GM12878 (cell line): ENCODE measurements at regions of chr19 and their contacts with region 1.

Region 1: DNA sequence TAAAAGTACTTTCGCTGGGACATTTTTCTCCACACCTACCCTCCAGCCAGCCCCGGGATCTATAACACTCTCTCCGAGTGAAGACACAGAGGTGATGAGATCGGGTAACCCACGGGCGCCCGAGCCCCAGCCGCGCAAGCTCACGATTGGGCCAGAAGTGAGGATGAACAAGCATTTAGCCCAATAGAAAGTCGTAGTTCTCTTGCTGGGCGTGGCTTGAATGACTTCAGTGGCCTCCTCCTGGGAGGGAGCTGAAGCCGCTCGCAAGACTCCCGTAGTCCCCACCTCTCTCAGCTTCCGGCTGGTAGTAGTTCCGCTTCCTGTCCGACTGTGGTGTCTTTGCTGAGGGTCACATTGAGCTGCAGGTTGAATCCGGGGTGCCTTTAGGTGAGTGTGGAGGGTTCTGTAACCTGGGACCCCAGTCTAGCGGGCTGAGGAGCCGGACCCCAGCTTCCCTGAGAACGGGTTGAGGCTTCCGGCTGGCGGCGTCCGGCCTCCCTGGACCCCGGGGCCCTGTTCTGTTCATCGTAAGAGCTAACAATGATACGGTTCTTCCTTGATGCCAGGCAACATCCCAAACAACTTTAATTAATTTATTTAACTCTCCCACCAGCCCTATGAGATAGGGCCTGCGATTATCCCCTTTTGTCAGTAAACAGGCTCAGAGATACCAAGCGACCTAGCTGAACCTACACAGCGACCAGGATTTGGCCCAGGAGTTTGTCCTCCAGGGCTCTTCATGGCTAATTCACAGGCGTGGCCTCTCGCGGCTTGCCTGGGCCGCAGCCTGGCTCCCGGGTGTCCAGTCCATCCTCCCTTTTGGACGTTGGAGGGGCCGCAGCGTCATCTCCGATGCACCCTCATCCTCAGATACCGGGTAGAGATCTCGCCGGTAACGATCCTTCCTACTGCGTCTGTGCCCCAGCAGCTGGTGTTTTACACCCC is at the start of gene COX6B1:
- DNase-seq: peak; percentile 96
- ATAC-seq: peak; percentile 77
- H3K4me3 ChIP-seq: peak within 1 kb of the TSS; percentile 99
- H3K27ac ChIP-seq: peak within 1 kb of the TSS; percentile 85
- H3K4me1 ChIP-seq: peaks cover 11% of the 10 kb centered on the region
- H3K27me3 ChIP-seq: no peaks in the 10 kb centered on the region
- CTCF ChIP-seq: no peak
- EP300 ChIP-seq: no peak
- POLR2A ChIP-seq: peak; percentile 91
- RAD21 ChIP-seq: no peak
- polyA plus RNA-seq, gene COX6B1: 1,597 to 1,700 TPM

Region 2: DNA sequence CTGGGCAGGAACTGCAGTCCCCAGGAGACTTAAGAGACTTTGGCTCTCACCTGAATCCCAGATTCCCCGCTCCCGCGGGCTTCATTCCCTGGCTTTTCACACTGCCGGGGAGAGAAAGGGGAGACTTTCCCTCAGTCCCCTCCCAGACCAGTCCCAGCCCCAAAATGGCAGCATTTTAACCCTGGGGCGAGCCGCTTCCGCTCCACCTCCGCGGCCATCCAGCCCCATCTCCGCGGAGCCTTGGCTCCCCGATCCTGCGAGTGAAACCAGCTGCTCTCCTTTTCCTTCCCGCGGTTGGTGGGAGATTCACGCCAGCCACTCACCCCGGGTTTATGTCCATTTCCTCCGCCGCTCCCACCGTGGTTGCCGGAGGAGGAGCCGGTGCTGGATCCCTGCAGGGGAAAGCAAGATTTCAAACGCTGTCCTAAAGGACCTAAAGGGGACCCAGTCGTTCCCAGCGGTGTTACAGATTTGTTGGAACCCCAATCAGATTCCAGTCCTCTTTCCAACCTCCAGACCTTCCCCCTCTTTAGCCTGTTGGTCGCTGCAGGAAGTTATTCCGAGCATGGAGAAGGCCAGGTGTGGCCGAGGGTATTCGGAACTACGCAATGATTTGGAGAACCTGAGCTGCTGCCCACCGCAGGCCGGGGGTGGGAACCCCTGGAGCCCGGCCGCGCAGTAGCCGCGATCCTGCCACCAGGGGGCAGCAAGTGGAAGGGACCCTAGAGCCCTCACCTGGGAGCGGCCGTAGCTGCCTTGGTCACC is 138.2 kb before region 1 on chr19:
- CTCF ChIA-PET with region 1: interaction called, 9 read pairs
- POLR2A ChIA-PET with region 1: interaction called, 14 read pairs
- RAD21 ChIA-PET with region 1: interaction called, 3 read pairs
- SMC1A ChIA-PET with region 1: no interaction called
- in situ Hi-C with region 1: no loop called
- intact Hi-C with region 1: no loop called
- DNase-seq: no peak
- ATAC-seq: peak; percentile 88
- H3K4me3 ChIP-seq: peak overlapping the region; percentile 74
- H3K27ac ChIP-seq: peak overlapping the region; percentile 52
- H3K4me1 ChIP-seq: peaks cover 8% of the 10 kb centered on the region
- H3K27me3 ChIP-seq: no peaks in the 10 kb centered on the region; a peak in 1 of 4 replicates
- CTCF ChIP-seq: peak; percentile 96; a peak in 5 of 6 replicates
- EP300 ChIP-seq: no peak
- POLR2A ChIP-seq: no peak; the same call in 1 of the 2 replicates
- RAD21 ChIP-seq: peak; percentile 71

Region 3: GRCh38 chr19:35612559-35613321 is 35.5 kb before region 1 on chr19 and contains the start of gene HAUS5:
- CTCF ChIA-PET with region 1: interaction called, 3 read pairs
- POLR2A ChIA-PET with region 1: interaction called, 30 read pairs
- RAD21 ChIA-PET with region 1: interaction called, 3 read pairs
- SMC1A ChIA-PET with region 1: interaction called, 8 read pairs
- in situ Hi-C with region 1: no loop called
- intact Hi-C with region 1: no loop called
- DNase-seq: peak; percentile 70
- ATAC-seq: peak; percentile 92
- H3K4me3 ChIP-seq: peak within 1 kb of the TSS; percentile 74
- H3K27ac ChIP-seq: peak within 1 kb of the TSS; percentile 81
- H3K4me1 ChIP-seq: peaks cover 17% of the 10 kb centered on the region
- H3K27me3 ChIP-seq: no peaks in the 10 kb centered on the region
- CTCF ChIP-seq: peak in 1 of 3 experiments; percentile 24; a peak in 1 of 6 replicates
- EP300 ChIP-seq: peak in 1 of 2 experiments; percentile 57; a peak in 1 of 4 replicates
- POLR2A ChIP-seq: peak; percentile 91
- RAD21 ChIP-seq: no peak
- polyA plus RNA-seq, gene HAUS5: 3.1 to 3.6 TPM

Region 4: DNA sequence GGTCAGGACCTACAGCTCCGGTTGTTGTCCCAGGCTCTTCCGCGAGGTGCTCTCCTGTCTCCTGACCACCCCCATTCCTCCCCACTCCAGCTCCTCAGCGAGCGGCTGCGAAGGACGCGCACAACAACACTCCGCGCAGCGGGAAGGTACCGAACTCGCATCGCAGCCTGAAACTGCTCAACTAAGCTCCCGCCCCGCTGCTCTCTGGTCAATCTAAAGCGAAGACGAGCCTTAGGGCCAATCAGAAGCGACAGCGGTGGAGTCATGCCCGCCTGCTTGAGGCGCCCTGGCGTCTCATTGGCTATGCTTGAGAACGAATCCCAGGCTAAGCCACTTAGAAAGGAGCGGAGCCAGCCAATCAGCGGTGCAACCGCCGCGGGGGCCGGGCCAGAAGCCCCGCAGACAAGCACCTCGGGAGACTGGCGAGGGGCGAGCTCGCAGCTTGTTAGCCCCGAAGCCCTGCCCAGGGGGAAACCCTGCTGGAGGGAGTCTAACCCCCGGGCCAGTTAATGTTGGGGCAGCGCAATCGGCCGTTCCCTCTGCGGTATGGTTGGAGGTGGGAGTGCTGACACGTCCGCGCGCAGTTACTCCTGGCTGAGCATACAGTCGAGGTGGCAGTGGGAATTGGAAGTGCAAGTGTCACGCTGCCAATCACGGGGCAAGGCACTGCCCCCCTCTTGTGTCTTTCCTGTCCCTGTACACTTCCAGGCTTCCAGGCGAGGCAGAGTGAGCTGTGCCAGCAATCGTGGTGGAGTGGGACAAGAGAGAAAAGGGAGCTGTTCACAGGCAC is 54.1 kb after region 1 on chr19:
- CTCF ChIA-PET with region 1: interaction called, 5 read pairs
- POLR2A ChIA-PET with region 1: interaction called, 10 read pairs
- RAD21 ChIA-PET with region 1: interaction called, 3 read pairs
- SMC1A ChIA-PET with region 1: no interaction called
- in situ Hi-C with region 1: no loop called
- intact Hi-C with region 1: no loop called
- DNase-seq: peak; percentile 96
- ATAC-seq: peak; percentile 98
- H3K4me3 ChIP-seq: peak overlapping the region; percentile 80
- H3K27ac ChIP-seq: peak overlapping the region; percentile 90
- H3K4me1 ChIP-seq: peaks cover 8% of the 10 kb centered on the region
- H3K27me3 ChIP-seq: no peaks in the 10 kb centered on the region
- CTCF ChIP-seq: no peak
- EP300 ChIP-seq: no peak
- POLR2A ChIP-seq: peak; percentile 93
- RAD21 ChIP-seq: no peak